Activated naive CD4-positive, alpha-beta T cell treated with anti-CD3 and anti-CD28 coated beads for 36 hours (primary cell): ENCODE measurements at regions of chr6 and their contacts with region 1.

Region 1: DNA sequence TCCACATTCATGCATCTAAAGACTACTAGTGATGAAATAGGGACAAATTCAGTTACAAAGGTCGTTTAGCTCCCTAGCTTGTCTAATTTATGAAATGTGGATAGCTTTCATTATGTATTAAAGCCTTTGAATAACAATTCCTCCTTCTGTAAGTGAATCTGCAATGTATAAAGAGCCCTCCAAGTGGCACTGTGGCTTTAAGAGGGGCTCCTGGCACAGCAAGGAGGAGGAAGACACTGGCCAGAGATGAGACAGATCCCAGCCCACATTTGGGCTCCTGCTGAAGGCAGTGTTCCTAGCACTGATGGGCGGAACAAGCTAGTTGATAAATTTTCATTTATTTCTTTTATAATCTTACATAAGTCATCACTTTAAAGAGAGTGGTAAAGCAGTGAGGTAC is 17.6 kb upstream of the FUCA2 start:
- DNase-seq: peak; percentile 38
- H3K4me3 Mint-ChIP-seq: no peak overlapping the region
- H3K27ac Mint-ChIP-seq: no peak overlapping the region
- H3K4me1 Mint-ChIP-seq: peaks cover 12% of the 10 kb centered on the region
- H3K27me3 Mint-ChIP-seq: no peaks in the 10 kb centered on the region

Region 2: DNA sequence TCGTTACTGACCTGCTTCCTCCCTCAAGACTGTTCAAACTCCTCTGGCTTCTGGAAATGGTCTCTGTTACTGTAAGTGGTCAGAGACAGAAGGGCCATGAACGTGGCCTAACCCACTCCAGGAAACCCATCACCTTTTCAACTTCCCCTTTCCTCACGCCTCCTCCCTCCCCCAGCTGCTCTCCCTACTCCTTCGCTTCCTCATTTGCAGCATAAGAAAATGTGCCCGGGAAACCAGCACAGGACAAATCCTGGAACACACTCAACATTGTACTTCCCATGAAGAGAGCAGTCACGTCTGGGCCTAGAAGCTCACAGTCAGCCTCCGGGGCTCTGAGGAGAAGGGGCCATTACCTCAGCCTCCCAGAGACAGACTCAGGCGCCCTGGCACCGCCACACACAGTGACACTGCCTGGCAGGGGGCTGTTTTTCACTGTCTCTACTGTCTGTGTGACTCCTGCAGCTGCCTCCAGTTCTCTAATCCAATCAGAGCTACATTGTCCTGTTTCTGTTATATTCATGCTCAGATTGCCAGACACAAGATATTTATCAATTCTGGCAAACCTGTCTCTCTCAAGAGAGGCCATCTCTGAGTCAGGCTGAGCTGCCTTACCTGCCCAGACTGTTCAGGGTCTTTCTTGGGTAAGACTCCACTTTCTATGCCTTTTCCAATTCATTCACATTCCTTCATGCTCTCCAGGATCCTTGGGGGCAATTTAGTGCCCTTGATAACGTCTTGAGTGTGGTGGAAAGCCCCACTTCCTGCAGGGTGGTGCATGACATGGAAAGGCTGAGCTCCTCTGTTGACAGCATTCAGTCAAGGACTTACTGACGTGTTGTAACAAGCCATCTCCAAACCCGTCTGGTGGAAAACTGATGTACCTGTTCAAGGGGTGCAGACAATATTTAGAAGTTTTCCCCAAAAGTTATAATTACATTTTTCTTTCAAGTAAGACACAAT is 826.3 kb before region 1 on chr6:
- CTCF ChIA-PET with region 1: no interaction called
- intact Hi-C with region 1: no loop called
- DNase-seq: no peak
- H3K4me3 Mint-ChIP-seq: no peak overlapping the region
- H3K27ac Mint-ChIP-seq: no peak overlapping the region
- H3K4me1 Mint-ChIP-seq: peaks cover 25% of the 10 kb centered on the region
- H3K27me3 Mint-ChIP-seq: no peaks in the 10 kb centered on the region

Region 3: DNA sequence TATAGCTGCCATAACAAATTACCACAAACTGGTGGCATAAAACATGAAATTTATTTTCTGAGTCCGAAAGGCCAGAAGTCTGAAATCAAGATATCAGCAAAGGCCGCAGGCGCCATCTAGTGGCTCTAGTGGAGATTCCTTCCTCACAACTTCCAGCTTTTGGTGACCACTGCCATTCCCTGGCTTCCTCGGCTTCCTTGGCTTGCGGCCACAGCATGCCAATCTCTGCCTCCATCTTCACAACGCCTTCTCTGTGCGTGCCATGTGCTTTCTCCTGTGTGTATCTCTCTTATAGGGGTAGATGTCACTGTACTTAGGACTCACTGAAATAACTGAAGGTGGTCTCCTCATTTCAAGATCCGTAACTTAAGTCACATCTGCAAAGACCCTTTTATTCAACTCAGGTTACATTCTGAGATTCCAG is 484.4 kb after region 1 on chr6:
- CTCF ChIA-PET with region 1: interaction called, 5 read pairs
- intact Hi-C with region 1: loop called (anchors 1 kb)
- DNase-seq: peak; percentile 78
- H3K4me3 Mint-ChIP-seq: no peak overlapping the region
- H3K27ac Mint-ChIP-seq: no peak overlapping the region
- H3K4me1 Mint-ChIP-seq: peaks cover 2% of the 10 kb centered on the region
- H3K27me3 Mint-ChIP-seq: peaks cover 10% of the 10 kb centered on the region